ENCODE measurements at regions of chr17 and their contacts with region 1.

Region 1: GRCh38 chr17:5249615-5250014 is 15.0 kb upstream of the SCIMP start:
- DNase-seq: peak; percentile 43
- H3K4me3 Mint-ChIP-seq: no peak overlapping the region
- H3K27ac Mint-ChIP-seq: no peak overlapping the region
- H3K4me1 Mint-ChIP-seq: peaks cover 6% of the 10 kb centered on the region
- H3K27me3 Mint-ChIP-seq: peaks cover 7% of the 10 kb centered on the region

Region 2: DNA sequence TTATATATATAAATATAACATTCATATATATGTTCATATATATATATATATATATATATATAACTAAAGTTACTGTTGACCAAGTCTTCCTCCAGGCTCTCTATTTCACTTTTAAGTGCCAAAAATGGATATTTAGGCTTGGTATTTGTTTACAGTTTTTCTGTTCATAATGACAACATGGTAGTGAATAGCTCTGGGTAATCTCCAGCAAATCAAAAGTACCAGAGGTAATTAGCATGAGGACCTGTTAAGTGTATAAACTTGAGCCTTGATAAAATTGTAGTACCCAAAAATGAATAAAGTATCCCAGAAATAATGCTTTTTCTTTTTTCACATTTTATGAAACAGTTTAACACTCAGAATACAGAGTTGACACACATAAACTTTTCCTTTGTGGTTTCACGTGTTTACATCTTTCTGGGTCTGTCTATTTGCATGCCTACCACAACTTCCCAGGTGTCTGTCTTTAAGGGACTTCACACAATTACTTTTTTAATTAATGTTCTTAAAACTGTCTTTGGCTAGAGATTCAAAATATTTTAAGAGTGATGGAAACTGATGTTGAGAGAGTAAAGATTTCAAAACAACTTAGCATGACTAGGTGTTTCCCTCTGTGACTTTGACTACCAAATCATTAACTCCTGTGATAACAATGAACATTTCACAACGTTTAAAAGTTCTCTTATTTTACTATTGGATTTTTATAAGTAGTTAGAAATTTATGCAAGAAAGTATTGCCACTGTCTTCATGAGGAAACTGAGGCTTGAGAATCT is 80.4 kb after region 1 on chr17:
- intact Hi-C with region 1: loop called (anchors 10 kb)
- DNase-seq: no peak
- H3K4me3 Mint-ChIP-seq: no peak overlapping the region
- H3K27ac Mint-ChIP-seq: peak overlapping the region; percentile 55
- H3K4me1 Mint-ChIP-seq: peaks cover 14% of the 10 kb centered on the region
- H3K27me3 Mint-ChIP-seq: no peaks in the 10 kb centered on the region

Region 3: GRCh38 chr17:5373112-5373511 is 123.5 kb after region 1 on chr17:
- intact Hi-C with region 1: loop called (anchors 10 kb)
- DNase-seq: no peak
- H3K4me3 Mint-ChIP-seq: no peak overlapping the region
- H3K27ac Mint-ChIP-seq: no peak overlapping the region
- H3K4me1 Mint-ChIP-seq: no peaks in the 10 kb centered on the region
- H3K27me3 Mint-ChIP-seq: no peaks in the 10 kb centered on the region

Region 4: GRCh38 chr17:5438716-5439445 is 189.3 kb after region 1 on chr17 and contains the start of gene C1QBP:
- intact Hi-C with region 1: loop called (anchors 1 kb)
- DNase-seq: peak; percentile 89
- H3K4me3 Mint-ChIP-seq: peak within 1 kb of the TSS; percentile 94
- H3K27ac Mint-ChIP-seq: peak within 1 kb of the TSS; percentile 87
- H3K4me1 Mint-ChIP-seq: peaks cover 40% of the 10 kb centered on the region
- H3K27me3 Mint-ChIP-seq: no peaks in the 10 kb centered on the region
- total RNA-seq, gene C1QBP: 410 and 413 TPM in 2 replicates

Region 5: DNA sequence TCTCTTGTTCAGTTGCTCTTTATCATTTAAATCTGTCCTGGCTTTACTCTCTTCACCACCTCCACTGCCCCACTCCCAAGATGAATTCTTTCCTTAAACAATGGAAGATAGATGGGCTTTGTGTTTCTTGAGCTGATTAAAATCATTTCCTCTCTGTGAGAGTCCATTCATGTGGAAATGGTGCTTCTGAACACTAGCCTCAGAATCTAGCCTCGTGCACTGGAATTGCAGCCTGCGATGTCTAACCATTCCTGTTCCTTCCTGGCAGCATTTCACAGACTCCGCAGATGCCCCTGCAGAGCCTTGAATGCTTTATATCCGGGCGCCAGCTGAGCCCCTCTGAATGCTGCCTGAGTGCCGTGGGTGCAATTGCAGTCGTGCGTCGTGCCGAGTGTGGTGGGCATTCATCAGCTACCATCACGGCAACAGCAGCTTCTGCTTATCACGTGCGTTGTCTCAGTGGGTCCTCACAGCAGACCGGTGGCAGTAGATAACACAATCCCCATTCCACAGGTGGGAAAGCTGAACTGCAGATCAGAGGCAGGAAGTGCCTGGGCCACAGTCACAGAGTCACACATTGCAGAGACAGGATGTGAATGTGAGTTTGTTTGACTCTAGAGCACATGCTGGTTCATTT is 647.8 kb after region 1 on chr17:
- intact Hi-C with region 1: no loop called
- DNase-seq: no peak
- H3K4me3 Mint-ChIP-seq: no peak overlapping the region
- H3K27ac Mint-ChIP-seq: no peak overlapping the region
- H3K4me1 Mint-ChIP-seq: no peaks in the 10 kb centered on the region
- H3K27me3 Mint-ChIP-seq: peaks cover 5% of the 10 kb centered on the region

Region 6: DNA sequence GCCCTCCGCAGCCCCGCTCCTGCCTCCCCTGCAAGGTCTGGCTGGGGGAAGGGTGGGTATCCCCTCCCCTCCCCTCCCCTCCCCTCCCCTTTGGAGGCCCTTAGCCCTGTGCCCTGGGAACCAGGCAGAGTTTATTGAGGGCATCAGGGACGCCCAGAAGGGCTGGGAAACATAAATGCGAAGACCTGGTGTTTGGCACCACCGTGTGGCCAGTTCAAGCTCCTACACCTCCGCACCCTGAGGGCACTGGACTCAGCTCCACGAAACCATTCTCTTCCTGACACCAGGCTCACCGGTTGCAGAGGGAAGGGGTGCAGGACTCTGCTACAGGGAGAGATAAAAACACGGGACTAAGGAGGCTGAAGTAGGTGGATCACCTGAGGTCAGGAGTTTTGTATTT is 1186.4 kb after region 1 on chr17:
- intact Hi-C with region 1: loop called (anchors 5 kb)
- DNase-seq: peak; percentile 44
- H3K4me3 Mint-ChIP-seq: no peak overlapping the region
- H3K27ac Mint-ChIP-seq: no peak overlapping the region
- H3K4me1 Mint-ChIP-seq: no peaks in the 10 kb centered on the region
- H3K27me3 Mint-ChIP-seq: peaks cover 59% of the 10 kb centered on the region